ENCODE measurements at regions of chr1 and their contacts with region 1.

Region 1: DNA sequence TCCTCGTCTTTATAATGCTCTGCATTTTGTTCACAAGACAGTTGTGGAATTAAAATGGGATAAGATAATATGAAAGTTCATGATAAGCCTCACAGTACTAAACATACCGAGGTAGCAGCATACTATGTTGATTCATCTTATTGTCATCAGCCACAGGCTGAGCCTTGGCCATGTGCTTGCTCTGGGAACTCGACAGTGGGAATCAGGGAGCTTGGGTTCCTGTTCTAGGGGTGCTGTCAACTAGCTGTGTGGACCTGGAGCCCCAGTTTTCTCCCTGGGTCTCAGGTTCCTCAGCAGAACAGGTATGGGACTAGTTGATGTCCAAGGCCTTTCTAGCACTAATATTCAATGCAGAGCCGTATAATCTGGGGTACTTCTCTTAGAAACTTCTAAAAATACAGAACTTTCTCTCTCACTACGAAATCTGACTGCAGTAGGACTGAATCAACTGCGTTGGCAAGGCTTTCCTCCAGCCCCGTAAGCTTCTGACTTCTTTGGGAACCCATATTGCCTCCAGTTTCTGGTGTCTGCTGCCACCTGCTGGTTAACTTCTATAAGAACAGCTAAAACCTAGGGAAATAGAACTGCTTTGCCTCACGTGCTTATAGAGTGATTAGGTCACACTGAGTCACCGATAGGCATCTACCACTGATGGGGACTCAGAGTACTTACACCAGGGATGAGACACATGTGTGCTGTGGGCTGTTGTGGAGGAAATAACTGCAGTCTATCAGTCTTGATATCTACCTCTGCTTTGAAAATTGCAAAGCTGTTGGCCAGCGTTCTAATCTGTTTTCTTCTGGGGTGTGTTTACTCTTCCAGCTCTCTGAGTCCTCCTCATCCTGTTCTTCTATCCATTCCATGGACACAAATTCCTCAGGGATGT is 110.9 kb downstream of the RGL1 start:
- DNase-seq: peak; percentile 97
- H3K4me3 ChIP-seq: peak overlapping the region; percentile 6
- H3K27ac ChIP-seq: peak overlapping the region; percentile 95
- H3K4me1 ChIP-seq: peaks cover 56% of the 10 kb centered on the region
- H3K27me3 ChIP-seq: no peaks in the 10 kb centered on the region
- CTCF ChIP-seq: peak; percentile 90

Region 2: DNA sequence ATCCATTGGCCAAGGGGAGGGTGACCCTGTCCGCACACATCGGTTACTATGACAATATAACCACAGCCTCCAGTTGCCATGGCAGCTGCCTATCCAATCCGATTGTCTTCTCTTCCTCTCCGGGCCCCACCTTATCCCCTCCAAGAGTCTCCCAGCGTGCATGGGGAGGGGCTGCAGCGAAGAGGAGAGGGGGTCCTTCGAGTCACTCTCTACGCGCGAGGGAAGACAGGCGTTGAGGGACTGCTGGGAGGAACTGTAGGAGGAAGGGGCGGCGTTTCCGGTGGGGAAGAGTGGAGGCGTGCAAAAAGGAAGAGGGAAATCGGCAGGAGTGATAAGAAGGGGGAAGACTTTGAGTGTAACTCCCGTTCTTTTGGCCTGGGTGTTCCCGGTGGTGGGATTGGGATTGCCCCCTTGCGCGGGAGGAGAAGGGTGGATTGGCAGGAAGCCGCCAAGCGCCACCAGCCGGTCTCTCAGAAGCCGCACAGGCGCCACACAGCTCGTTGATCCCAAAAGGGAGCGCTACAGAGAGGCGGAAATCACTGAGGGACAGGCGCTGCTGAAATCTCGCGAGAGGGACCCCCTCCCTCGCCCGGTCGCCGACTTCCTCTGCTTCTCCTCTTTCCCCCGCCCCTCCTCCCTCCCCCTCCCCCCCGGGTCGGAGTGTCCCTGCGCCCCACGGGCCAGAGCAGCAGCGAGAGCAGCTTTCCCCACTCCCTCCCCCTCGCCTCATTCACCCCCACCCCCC is 444.0 kb before region 1 on chr1:
- CTCF ChIA-PET with region 1: no interaction called
- POLR2A ChIA-PET with region 1: no interaction called
- intact Hi-C with region 1: loop called (anchors 5 kb)
- DNase-seq: peak; percentile 100
- H3K4me3 ChIP-seq: peak overlapping the region; percentile 98
- H3K27ac ChIP-seq: peak overlapping the region; percentile 99
- H3K4me1 ChIP-seq: peaks cover 14% of the 10 kb centered on the region
- H3K27me3 ChIP-seq: no peaks in the 10 kb centered on the region
- CTCF ChIP-seq: no peak

Region 3: GRCh38 chr1:183571678-183572268 is 344.1 kb before region 1 on chr1:
- CTCF ChIA-PET with region 1: no interaction called
- POLR2A ChIA-PET with region 1: no interaction called
- intact Hi-C with region 1: no loop called
- DNase-seq: no peak
- H3K4me3 ChIP-seq: no peak overlapping the region
- H3K27ac ChIP-seq: no peak overlapping the region
- H3K4me1 ChIP-seq: no peaks in the 10 kb centered on the region
- H3K27me3 ChIP-seq: no peaks in the 10 kb centered on the region
- CTCF ChIP-seq: no peak

Region 4: DNA sequence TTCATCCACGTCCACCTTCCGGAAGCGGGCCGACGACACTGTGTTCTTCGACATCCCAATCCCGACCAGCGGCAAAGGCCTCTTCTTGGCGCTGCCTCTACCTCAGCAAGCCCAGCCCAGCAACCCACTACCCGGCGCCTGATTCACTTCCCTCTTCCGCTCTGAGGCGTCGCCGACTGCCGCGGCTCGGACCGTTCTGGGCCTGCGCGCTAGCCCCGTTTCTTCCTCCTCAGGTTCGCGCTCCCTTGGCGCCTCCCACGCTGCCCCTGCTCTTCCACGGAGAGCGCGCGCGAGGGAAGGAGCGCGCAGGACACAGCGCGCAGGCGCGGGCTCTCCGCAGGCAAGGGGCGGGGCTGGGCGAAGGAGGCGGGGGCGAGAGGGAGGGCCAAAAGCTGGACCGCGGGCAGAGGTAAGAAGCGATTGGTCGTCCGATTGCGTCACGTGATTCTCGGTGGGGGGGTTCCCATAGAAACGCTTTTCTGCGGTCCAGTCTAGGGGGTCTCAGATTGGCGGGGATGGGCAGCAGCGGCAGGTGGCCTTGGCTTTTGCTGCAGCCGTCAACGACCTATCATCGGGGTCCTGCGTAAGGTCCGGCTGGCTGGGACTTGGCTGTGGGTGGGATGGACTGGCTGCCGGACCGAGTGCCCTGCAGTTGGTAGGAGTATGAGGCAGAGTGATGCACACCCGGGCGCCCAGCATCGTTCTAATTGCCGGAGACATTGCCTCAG is 280.1 kb before region 1 on chr1 and contains the start of gene ARPC5:
- CTCF ChIA-PET with region 1: interaction called, 16 read pairs
- POLR2A ChIA-PET with region 1: no interaction called
- intact Hi-C with region 1: no loop called
- DNase-seq: peak; percentile 99
- H3K4me3 ChIP-seq: peak within 1 kb of the TSS; percentile 76
- H3K27ac ChIP-seq: peak within 1 kb of the TSS; percentile 88
- H3K4me1 ChIP-seq: peaks cover 25% of the 10 kb centered on the region
- H3K27me3 ChIP-seq: no peaks in the 10 kb centered on the region
- CTCF ChIP-seq: no peak
- total RNA-seq, gene ARPC5: 138 and 158 TPM in 2 replicates

Region 5: GRCh38 chr1:183685112-183685713 is 230.7 kb before region 1 on chr1:
- CTCF ChIA-PET with region 1: interaction called, 14 read pairs
- POLR2A ChIA-PET with region 1: no interaction called
- intact Hi-C with region 1: no loop called
- DNase-seq: peak; percentile 82
- H3K4me3 ChIP-seq: no peak overlapping the region
- H3K27ac ChIP-seq: no peak overlapping the region
- H3K4me1 ChIP-seq: peaks cover 13% of the 10 kb centered on the region
- H3K27me3 ChIP-seq: no peaks in the 10 kb centered on the region
- CTCF ChIP-seq: peak; percentile 85

Region 6: GRCh38 chr1:183942933-183943693 is 27.2 kb after region 1 on chr1:
- CTCF ChIA-PET with region 1: no interaction called
- POLR2A ChIA-PET with region 1: no interaction called
- intact Hi-C with region 1: no loop called
- DNase-seq: peak; percentile 96
- H3K4me3 ChIP-seq: no peak overlapping the region
- H3K27ac ChIP-seq: peak overlapping the region; percentile 74
- H3K4me1 ChIP-seq: peaks cover 22% of the 10 kb centered on the region
- H3K27me3 ChIP-seq: no peaks in the 10 kb centered on the region
- CTCF ChIP-seq: peak; percentile 54

Region 7: DNA sequence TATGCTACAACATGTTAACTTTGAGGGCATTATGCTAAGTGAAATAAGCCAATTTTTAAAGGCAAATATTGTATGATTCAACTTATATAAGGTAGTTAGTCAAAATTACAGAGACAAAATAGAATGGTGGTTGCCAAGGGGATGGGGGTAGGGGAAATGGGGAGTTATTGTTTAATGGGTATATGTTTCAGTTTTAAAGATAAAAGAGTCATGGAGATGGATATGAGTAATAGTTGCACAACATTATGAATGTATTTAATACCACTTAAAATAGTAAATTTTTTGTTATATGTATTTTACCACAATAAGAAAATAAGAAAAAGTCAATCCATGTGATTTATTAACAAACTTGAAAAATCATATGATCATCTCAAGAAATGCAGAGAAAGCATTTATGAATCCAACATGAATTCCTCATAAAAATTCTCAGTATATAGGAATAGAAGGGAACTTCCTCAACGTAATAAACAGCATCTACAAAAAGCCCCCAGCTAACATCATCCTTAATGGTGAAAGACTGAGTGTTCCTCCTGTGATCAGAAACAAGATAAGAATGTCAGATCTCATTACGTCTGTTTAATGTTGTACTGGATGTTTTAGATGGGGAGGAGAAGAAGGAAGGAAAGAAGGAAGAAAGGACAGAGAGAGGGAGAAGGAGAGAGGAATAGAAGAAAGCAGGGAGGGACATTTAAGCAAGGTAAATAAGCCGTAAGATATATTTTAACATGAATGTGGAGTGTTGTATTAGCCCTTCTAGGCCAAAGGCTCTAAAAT is 128.9 kb after region 1 on chr1:
- CTCF ChIA-PET with region 1: no interaction called
- POLR2A ChIA-PET with region 1: no interaction called
- intact Hi-C with region 1: no loop called
- DNase-seq: no peak
- H3K4me3 ChIP-seq: no peak overlapping the region
- H3K27ac ChIP-seq: no peak overlapping the region
- H3K4me1 ChIP-seq: no peaks in the 10 kb centered on the region
- H3K27me3 ChIP-seq: no peaks in the 10 kb centered on the region
- CTCF ChIP-seq: no peak

Region 8: GRCh38 chr1:184664042-184664655 is 748.3 kb after region 1 on chr1:
- CTCF ChIA-PET with region 1: interaction called, 10 read pairs
- POLR2A ChIA-PET with region 1: no interaction called
- intact Hi-C with region 1: loop called (anchors 10 kb)
- DNase-seq: peak; percentile 88
- H3K4me3 ChIP-seq: no peak overlapping the region
- H3K27ac ChIP-seq: no peak overlapping the region
- H3K4me1 ChIP-seq: peaks cover 5% of the 10 kb centered on the region
- H3K27me3 ChIP-seq: no peaks in the 10 kb centered on the region
- CTCF ChIP-seq: peak; percentile 96

Measured in A673 (cell line).